ENCODE measurements at regions of chr9 and their contacts with region 1.

Region 1: DNA sequence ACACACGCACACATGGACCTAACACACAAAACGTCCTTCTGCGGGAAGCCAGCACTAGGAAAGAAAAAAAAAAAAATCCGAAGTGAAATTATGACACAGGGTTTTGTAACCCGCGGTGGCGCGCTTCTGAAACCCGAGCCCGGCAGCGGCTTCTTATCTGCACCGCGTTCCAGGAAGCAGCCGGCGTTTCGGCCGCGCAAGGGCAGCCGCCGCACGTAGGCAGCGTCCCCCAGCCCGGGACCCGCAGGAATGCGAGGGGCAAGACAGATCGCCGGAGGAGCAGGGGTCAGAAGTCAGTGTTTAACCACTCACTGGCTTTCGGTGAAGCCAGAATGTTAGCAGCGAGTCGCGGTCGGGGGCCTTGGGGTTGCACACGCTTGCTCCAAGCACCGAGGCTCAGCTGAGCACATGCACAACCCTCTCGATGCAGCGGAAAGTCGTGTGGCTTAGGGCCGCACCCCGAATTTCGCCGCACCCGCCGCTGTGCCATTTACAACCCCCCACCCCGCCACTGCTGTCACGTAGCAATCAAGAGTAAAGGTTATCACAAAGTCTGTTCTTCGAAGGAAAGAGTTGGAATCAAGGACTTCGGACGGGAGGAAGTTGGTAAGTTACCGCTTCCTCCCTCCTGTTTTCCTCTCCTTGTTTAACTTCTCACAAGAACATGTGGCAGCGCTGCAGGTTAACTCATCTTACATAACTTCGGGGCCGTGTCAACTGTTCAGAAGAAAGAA is 167.9 kb downstream of the AUH start:
- DNase-seq: peak; percentile 88
- H3K4me3 ChIP-seq: peak overlapping the region; percentile 39
- H3K27ac ChIP-seq: peak overlapping the region; percentile 98
- H3K4me1 ChIP-seq: peaks cover 6% of the 10 kb centered on the region
- H3K27me3 ChIP-seq: no peaks in the 10 kb centered on the region
- CTCF ChIP-seq: no peak

Region 2: GRCh38 chr9:89318123-89319014 is 1875.5 kb before region 1 on chr9 and contains the start of gene SECISBP2:
- intact Hi-C with region 1: loop called (anchors 10 kb)
- DNase-seq: peak; percentile 95
- H3K4me3 ChIP-seq: peak within 1 kb of the TSS; percentile 71
- H3K27ac ChIP-seq: peak within 1 kb of the TSS; percentile 99
- H3K4me1 ChIP-seq: peaks cover 10% of the 10 kb centered on the region
- H3K27me3 ChIP-seq: no peaks in the 10 kb centered on the region
- CTCF ChIP-seq: peak; percentile 68
- total RNA-seq, gene SECISBP2: 37.6 to 42.2 TPM

Region 3: DNA sequence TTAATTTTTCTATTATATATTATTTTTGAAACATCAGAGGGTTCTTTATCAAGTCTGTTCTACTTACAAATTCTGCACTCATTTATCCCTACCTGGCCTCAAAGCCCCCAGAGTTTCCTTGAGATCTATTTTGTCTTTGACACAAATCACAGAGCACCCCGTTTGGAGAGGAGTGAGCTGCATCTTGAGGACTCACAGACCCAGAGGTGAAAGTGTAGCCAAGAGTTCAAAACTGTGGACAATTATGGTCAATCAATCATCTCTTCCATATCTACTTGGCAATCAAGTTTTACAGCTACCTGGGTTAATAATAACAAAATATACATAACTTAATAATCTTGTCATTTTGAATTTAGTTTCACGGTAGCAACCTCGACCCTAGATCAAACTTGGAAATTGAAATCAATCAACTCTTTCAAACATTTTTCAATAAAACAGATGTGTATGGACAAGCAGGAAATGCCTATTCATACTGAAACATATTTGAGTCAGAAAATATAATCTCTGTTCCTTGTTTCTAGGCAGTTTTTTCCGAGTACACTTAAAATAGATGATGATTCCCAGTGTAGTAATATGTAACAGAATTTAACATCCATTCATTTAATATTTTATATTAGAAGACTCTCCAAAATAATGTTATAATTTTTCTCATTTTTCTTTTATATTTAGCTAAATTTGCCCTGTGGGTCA is 405.9 kb before region 1 on chr9:
- intact Hi-C with region 1: no loop called
- DNase-seq: no peak
- H3K4me3 ChIP-seq: no peak overlapping the region
- H3K27ac ChIP-seq: no peak overlapping the region
- H3K4me1 ChIP-seq: no peaks in the 10 kb centered on the region
- H3K27me3 ChIP-seq: no peaks in the 10 kb centered on the region
- CTCF ChIP-seq: no peak

Region 4: DNA sequence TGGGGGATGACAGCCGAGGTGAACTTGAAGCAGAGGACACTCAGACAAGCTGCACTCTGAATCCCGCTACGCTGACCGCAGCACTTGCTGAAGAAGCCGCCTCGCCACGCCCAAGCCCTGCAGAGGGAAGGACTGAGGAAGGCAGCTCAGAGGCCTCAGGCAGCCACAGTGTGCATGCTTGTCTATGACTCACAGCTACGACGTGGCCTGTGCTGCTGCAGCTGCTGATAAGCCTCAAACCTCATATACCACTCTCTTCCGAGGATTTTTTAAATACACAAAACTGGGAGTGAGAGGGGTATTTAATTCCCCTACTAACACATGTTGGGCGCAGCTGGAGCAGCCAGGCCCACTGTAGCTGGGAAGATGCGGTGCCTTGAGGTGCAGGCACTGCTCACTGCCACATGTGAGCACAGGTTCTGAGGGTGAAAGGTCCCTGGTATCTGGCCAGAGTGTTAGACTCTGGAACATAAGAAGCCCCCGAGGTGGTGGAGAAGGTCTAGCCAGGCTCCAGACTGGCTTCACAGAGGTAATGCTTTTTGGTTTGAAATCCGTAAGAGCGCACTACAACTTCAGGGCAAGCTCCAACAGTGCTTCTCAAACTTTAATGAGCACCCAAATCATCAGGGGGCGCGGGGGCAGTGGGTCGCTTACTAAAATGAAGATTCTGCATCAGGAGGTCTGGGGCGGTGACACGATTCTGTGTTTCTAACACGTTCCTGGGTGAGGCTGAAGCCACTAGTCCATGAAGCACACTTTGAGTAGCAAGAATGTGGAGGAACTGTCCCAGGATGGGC is 28.9 kb before region 1 on chr9:
- intact Hi-C with region 1: no loop called
- DNase-seq: peak; percentile 87
- H3K4me3 ChIP-seq: no peak overlapping the region
- H3K27ac ChIP-seq: peak overlapping the region; percentile 69
- H3K4me1 ChIP-seq: peaks cover 15% of the 10 kb centered on the region
- H3K27me3 ChIP-seq: no peaks in the 10 kb centered on the region
- CTCF ChIP-seq: no peak

Region 5: GRCh38 chr9:91589101-91589553 is 395.3 kb after region 1 on chr9:
- intact Hi-C with region 1: no loop called
- DNase-seq: no peak
- H3K4me3 ChIP-seq: no peak overlapping the region
- H3K27ac ChIP-seq: no peak overlapping the region
- H3K4me1 ChIP-seq: no peaks in the 10 kb centered on the region
- H3K27me3 ChIP-seq: no peaks in the 10 kb centered on the region
- CTCF ChIP-seq: no peak